ENCODE measurements at regions of chr1 and their contacts with region 1.

Region 1: GRCh38 chr1:176196728-176197127 is 10.4 kb downstream of the COP1 start:
- DNase-seq: no peak
- ATAC-seq: no peak
- H3K4me3 ChIP-seq: no peak overlapping the region
- H3K27ac ChIP-seq: no peak overlapping the region
- H3K4me1 ChIP-seq: no peaks in the 10 kb centered on the region
- H3K27me3 ChIP-seq: no peaks in the 10 kb centered on the region
- CTCF ChIP-seq: no peak

Region 2: GRCh38 chr1:175373786-175374623 is 822.7 kb before region 1 on chr1:
- CTCF ChIA-PET with region 1: interaction called, 15 read pairs
- POLR2A ChIA-PET with region 1: no interaction called
- intact Hi-C with region 1: no loop called
- DNase-seq: peak; percentile 40
- ATAC-seq: peak; percentile 61
- H3K4me3 ChIP-seq: no peak overlapping the region
- H3K27ac ChIP-seq: no peak overlapping the region
- H3K4me1 ChIP-seq: no peaks in the 10 kb centered on the region
- H3K27me3 ChIP-seq: peaks cover 18% of the 10 kb centered on the region; the same call in 1 of the 2 replicates
- CTCF ChIP-seq: peak; percentile 72

Region 3: DNA sequence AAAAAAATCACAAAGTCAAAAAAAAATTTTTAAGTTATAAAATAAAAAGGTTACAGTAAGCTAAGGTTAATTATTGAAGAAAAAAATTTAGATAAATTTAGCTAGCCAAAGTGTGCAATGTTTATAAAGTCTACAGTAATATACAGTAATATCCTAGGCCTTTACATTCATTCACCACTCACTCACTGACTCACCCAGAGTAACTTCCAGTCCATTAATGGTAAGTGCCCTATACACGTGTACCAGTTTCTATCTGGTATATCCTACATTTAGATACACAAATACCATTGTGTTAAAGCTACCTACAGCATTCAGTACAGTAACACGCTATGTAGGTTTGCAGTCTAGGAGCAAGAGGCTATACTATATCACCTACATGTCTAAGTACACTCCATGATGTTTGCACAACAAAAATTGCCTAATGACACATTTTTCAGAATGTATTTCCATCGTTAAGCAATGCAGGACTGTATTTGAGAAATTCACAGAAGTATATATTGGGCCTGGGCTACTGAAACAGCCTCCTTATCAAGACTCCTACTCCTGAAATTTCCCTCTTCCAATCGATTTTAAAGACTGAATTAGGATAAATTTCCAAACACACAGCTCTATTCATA is 144.7 kb before region 1 on chr1:
- CTCF ChIA-PET with region 1: no interaction called
- POLR2A ChIA-PET with region 1: no interaction called
- intact Hi-C with region 1: no loop called
- DNase-seq: peak; percentile 34
- ATAC-seq: peak; percentile 71
- H3K4me3 ChIP-seq: no peak overlapping the region
- H3K27ac ChIP-seq: no peak overlapping the region
- H3K4me1 ChIP-seq: no peaks in the 10 kb centered on the region
- H3K27me3 ChIP-seq: no peaks in the 10 kb centered on the region
- CTCF ChIP-seq: no peak

Region 4: DNA sequence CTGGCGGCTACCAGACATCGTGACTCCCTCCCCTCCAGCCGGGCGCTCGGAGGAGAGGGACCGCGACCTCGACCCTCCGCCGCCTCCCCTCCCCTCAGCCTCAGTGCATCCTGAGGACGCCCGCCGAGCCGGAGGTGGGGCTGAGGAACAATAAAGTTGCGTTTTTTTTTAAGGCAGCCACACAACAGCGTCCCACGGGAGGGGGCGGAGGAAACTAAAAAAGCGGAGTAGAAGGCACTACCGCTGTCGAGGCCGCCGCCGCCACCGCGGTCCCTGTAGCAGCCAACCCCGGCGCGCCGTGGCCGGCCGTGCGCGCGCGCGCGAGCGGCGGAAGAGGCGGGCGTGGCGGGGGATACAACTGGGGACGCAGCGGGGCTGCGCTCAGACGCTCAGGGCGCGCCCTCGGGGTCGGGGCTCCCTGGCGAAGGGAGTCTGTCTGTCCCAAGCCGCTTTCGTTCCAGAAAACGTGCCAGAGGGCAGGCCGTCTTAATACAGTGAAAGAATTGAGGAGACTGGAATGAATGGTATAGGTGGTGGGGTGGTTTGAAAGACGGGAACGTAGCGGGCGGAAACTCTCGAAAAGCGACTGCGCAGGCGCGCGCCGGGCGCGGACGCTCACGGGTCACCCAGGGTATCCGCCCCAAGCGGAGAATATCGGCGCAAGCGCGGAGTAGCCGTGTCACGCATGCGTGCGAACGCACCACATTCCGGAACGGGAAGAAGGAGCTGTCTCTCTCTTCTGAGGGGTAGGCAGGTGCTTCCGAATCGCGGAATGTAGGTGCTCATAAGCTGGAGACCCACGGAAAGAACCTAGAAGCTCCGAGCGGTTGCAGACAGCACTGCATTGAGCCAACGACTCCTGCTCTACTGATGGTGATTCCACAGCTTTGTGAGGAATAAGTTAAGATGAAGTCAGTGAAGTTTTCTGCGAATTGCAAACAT is 10.5 kb after region 1 on chr1 and contains the start of gene COP1:
- CTCF ChIA-PET with region 1: no interaction called
- POLR2A ChIA-PET with region 1: no interaction called
- intact Hi-C with region 1: no loop called
- DNase-seq: peak; percentile 96
- ATAC-seq: peak; percentile 85
- H3K4me3 ChIP-seq: peak within 1 kb of the TSS; percentile 97
- H3K27ac ChIP-seq: peak within 1 kb of the TSS; percentile 79
- H3K4me1 ChIP-seq: peaks cover 22% of the 10 kb centered on the region
- H3K27me3 ChIP-seq: no peaks in the 10 kb centered on the region
- CTCF ChIP-seq: no peak
- total RNA-seq, gene COP1: 8.8 and 16.6 TPM in 2 replicates

Region 5: DNA sequence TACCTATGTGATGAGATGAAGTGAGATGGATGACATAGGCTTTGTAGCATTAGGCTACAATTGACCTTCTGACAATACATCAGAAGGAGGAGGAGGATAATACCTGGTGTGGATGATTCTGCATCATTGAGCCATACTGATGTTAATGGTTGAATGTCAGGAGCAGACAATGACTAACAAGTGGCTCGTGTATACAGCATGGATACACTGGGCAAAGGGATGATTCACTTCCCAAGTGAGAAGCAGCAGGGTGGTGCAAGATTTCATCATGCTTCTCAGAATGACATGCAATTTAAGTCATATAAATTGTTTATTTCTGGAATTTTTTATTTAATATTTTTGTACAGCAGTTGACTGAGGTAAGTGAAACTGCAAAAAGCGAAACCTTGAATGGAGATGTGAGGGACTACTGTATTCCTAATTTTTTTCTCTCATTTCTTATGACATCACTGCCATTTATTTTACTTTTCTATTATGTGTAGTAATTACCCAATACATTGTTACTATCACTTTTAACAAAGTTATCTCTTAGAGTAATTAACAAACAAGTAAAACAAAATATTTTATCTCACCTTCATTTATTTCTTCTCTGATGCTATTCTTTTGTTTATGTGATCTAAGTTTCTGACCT is 44.8 kb after region 1 on chr1:
- CTCF ChIA-PET with region 1: no interaction called
- POLR2A ChIA-PET with region 1: no interaction called
- intact Hi-C with region 1: no loop called
- DNase-seq: peak; percentile 68
- ATAC-seq: peak; percentile 71
- H3K4me3 ChIP-seq: no peak overlapping the region
- H3K27ac ChIP-seq: no peak overlapping the region
- H3K4me1 ChIP-seq: 0 out of 2 replicates have a peak, but pooled peaks cover 5% of the 10 kb centered on the region
- H3K27me3 ChIP-seq: no peaks in the 10 kb centered on the region
- CTCF ChIP-seq: no peak

Region 6: GRCh38 chr1:176263278-176263677 is 66.5 kb after region 1 on chr1:
- CTCF ChIA-PET with region 1: no interaction called
- POLR2A ChIA-PET with region 1: no interaction called
- intact Hi-C with region 1: no loop called
- DNase-seq: no peak
- ATAC-seq: no peak
- H3K4me3 ChIP-seq: no peak overlapping the region
- H3K27ac ChIP-seq: no peak overlapping the region
- H3K4me1 ChIP-seq: no peaks in the 10 kb centered on the region
- H3K27me3 ChIP-seq: no peaks in the 10 kb centered on the region
- CTCF ChIP-seq: no peak

Measured in PC-3 (cell line).